ENCODE measurements at regions of chr16 and their contacts with region 1.

Region 1: GRCh38 chr16:87765776-87766484 is at the start of gene KLHDC4:
- DNase-seq: peak; percentile 94
- ATAC-seq: peak; percentile 83
- H3K4me3 Mint-ChIP-seq: peak within 1 kb of the TSS; percentile 100
- H3K27ac Mint-ChIP-seq: peak within 1 kb of the TSS; percentile 100
- H3K4me1 Mint-ChIP-seq: peaks cover 46% of the 10 kb centered on the region
- H3K27me3 Mint-ChIP-seq: no peaks in the 10 kb centered on the region
- total RNA-seq, gene KLHDC4: 86.0 to 114 TPM

Region 2: GRCh38 chr16:87621976-87622713 is 143.8 kb before region 1 on chr16:
- CTCF ChIA-PET with region 1: no interaction called
- DNase-seq: no peak
- ATAC-seq: no peak
- H3K4me3 Mint-ChIP-seq: no peak overlapping the region
- H3K27ac Mint-ChIP-seq: no peak overlapping the region
- H3K4me1 Mint-ChIP-seq: no peaks in the 10 kb centered on the region
- H3K27me3 Mint-ChIP-seq: no peaks in the 10 kb centered on the region

Region 3: GRCh38 chr16:87702325-87702811 is 63.6 kb before region 1 on chr16:
- CTCF ChIA-PET with region 1: interaction called, 14 read pairs
- DNase-seq: peak; percentile 78
- ATAC-seq: peak; percentile 67
- H3K4me3 Mint-ChIP-seq: peak overlapping the region; percentile 38
- H3K27ac Mint-ChIP-seq: peak overlapping the region; percentile 80
- H3K4me1 Mint-ChIP-seq: peaks cover 60% of the 10 kb centered on the region
- H3K27me3 Mint-ChIP-seq: no peaks in the 10 kb centered on the region